GM12878 (cell line): ENCODE measurements at regions of chr2 and their contacts with region 1.

Region 1: GRCh38 chr2:231713730-231714430 is 5.6 kb downstream of the PTMA start:
- DNase-seq: peak; percentile 56
- ATAC-seq: peak; percentile 58
- H3K4me3 ChIP-seq: 0 out of 2 replicates have a peak overlapping the region, but pooled peaks have one; percentile 15
- H3K27ac ChIP-seq: 0 out of 2 replicates have a peak overlapping the region, but pooled peaks have one; percentile 7
- H3K4me1 ChIP-seq: peaks cover 20% of the 10 kb centered on the region
- H3K27me3 ChIP-seq: no peaks in the 10 kb centered on the region
- CTCF ChIP-seq: peak; percentile 92 to 95 (median 95)
- EP300 ChIP-seq: no peak
- POLR2A ChIP-seq: no peak
- RAD21 ChIP-seq: peak; percentile 49

Region 2: GRCh38 chr2:231557571-231558237 is 156.2 kb before region 1 on chr2:
- CTCF ChIA-PET with region 1: interaction called, 17 read pairs
- POLR2A ChIA-PET with region 1: no interaction called
- RAD21 ChIA-PET with region 1: interaction called, 14 read pairs
- SMC1A ChIA-PET with region 1: interaction called, 3 read pairs
- in situ Hi-C with region 1: no loop called
- intact Hi-C with region 1: no loop called
- DNase-seq: peak; percentile 49
- ATAC-seq: peak; percentile 95
- H3K4me3 ChIP-seq: no peak overlapping the region
- H3K27ac ChIP-seq: no peak overlapping the region
- H3K4me1 ChIP-seq: peaks cover 20% of the 10 kb centered on the region
- H3K27me3 ChIP-seq: no peaks in the 10 kb centered on the region
- CTCF ChIP-seq: peak; percentile 66 to 87 (median 74)
- EP300 ChIP-seq: no peak
- POLR2A ChIP-seq: no peak
- RAD21 ChIP-seq: peak; percentile 92

Region 3: DNA sequence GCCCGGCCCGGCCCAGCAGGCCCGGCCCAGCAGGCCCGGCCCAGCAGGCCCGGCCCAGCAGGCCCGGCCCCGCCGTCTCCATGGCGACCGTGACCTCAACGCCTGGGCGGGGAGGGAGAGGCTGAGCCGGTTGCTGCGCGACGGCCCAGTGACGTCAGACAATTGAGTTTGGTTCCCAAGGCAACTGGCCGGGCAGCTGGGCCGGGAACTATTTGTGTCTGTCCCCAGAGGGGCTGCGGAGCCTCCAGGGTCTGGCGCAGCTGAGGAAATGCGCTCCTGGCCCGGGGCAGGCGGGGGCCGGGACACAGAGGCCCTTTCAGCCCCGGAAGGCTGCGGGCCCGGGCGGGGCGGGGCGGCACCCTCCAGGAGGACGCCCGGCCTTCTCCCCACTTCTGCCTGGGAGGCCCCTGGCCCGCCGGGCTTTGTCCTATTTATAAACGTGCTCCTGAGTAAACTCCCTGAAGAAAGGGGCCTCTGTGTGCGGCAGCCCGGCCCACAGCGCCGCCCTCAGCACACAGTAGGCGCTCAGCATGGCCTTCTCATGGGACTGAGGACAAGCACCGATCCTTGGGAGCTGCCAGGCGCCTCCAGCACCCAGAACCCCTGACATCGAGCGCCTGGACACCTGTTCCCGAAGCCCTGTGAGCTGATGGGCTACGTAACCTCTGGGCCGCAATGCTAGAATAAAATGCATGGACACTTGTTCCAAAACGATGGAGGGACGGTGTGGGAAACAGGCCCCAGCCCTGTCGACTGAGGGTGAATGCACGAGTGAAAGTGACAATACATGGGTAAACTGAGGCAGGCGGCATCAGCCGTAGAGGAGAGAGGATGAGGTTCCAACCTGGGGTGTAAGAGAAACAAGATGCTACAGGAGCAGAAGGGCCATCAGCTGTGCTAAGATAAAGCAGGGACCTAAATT is 108.9 kb before region 1 on chr2:
- CTCF ChIA-PET with region 1: interaction called, 197 read pairs
- POLR2A ChIA-PET with region 1: interaction called, 4 read pairs
- RAD21 ChIA-PET with region 1: interaction called, 124 read pairs
- SMC1A ChIA-PET with region 1: interaction called, 12 read pairs
- in situ Hi-C with region 1: loop called (anchors 5 kb)
- intact Hi-C with region 1: no loop called
- DNase-seq: peak; percentile 83
- ATAC-seq: peak; percentile 84
- H3K4me3 ChIP-seq: peak overlapping the region; percentile 28; the same call in 1 of the 2 replicates
- H3K27ac ChIP-seq: peak overlapping the region; percentile 58
- H3K4me1 ChIP-seq: peaks cover 17% of the 10 kb centered on the region
- H3K27me3 ChIP-seq: no peaks in the 10 kb centered on the region
- CTCF ChIP-seq: peak in 1 of 3 experiments; percentile 27; a peak in 1 of 6 replicates
- EP300 ChIP-seq: peak; percentile 41 to 91; a peak in 3 of 4 replicates
- POLR2A ChIP-seq: no peak; the same call in 1 of the 2 replicates
- RAD21 ChIP-seq: no peak

Region 4: GRCh38 chr2:231632559-231633142 is 81.2 kb before region 1 on chr2:
- CTCF ChIA-PET with region 1: interaction called, 14 read pairs
- POLR2A ChIA-PET with region 1: no interaction called
- RAD21 ChIA-PET with region 1: interaction called, 6 read pairs
- SMC1A ChIA-PET with region 1: no interaction called
- in situ Hi-C with region 1: no loop called
- intact Hi-C with region 1: no loop called
- DNase-seq: no peak
- ATAC-seq: no peak
- H3K4me3 ChIP-seq: no peak overlapping the region
- H3K27ac ChIP-seq: no peak overlapping the region
- H3K4me1 ChIP-seq: no peaks in the 10 kb centered on the region
- H3K27me3 ChIP-seq: no peaks in the 10 kb centered on the region
- CTCF ChIP-seq: no peak
- EP300 ChIP-seq: no peak
- POLR2A ChIP-seq: no peak
- RAD21 ChIP-seq: no peak

Region 5: DNA sequence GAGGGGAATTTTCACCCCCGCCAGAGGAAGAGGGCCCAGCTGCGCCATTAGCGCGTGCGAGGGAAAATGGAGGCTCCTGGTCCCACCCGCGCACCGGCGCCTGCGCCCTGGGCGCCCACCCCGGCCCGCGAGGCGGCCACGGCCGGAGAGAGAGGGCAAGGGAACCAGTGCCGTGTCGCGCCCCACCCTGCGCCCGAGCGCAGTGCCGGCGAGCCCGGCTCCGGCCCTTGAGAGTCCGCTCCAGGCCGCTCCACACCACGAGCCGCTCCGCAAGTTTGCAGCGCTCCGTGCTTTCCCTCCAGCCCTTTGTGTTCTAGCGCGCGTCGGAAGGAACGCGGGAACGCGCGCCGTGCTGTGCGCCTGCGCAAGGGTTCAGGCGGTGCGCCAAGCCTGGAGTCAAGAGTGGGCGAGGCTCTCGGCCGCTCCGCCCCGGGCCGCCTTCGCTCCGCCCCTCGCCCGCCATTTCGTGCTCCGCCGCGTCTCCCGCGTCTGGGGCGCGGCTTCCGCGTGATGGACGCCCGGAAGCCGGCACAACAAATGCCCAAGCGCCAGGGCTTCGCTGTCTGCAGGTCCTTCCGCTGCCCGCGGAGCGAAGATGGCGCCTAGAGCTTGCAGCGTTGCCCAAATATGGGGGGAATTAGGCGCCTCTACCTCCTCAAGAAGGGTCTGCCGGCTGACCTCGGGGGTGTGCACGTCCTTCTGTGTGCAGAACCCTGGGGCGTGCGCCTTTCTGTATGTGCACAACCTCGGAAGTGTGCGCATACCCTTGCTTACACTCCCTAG is 51.7 kb before region 1 on chr2:
- CTCF ChIA-PET with region 1: interaction called, 12 read pairs
- POLR2A ChIA-PET with region 1: interaction called, 37 read pairs
- RAD21 ChIA-PET with region 1: interaction called, 3 read pairs
- SMC1A ChIA-PET with region 1: interaction called, 3 read pairs
- in situ Hi-C with region 1: no loop called
- intact Hi-C with region 1: no loop called
- DNase-seq: peak; percentile 95
- ATAC-seq: peak; percentile 77
- H3K4me3 ChIP-seq: peak overlapping the region; percentile 56; the same call in 1 of the 2 replicates
- H3K27ac ChIP-seq: peak overlapping the region; percentile 92
- H3K4me1 ChIP-seq: peaks cover 36% of the 10 kb centered on the region
- H3K27me3 ChIP-seq: no peaks in the 10 kb centered on the region
- CTCF ChIP-seq: no peak
- EP300 ChIP-seq: peak; percentile 10 to 53; a peak in 1 of 4 replicates
- POLR2A ChIP-seq: peak; percentile 85
- RAD21 ChIP-seq: 0 out of 2 replicates have a peak, but pooled peaks have one; percentile 7

Region 6: GRCh38 chr2:231687133-231687852 is 26.6 kb before region 1 on chr2:
- CTCF ChIA-PET with region 1: interaction called, 811 read pairs
- POLR2A ChIA-PET with region 1: interaction called, 7 read pairs
- RAD21 ChIA-PET with region 1: interaction called, 463 read pairs
- SMC1A ChIA-PET with region 1: interaction called, 33 read pairs
- in situ Hi-C with region 1: no loop called
- intact Hi-C with region 1: loop called (anchors 1 kb)
- DNase-seq: no peak
- ATAC-seq: peak; percentile 97
- H3K4me3 ChIP-seq: peak overlapping the region; percentile 28; the same call in 1 of the 2 replicates
- H3K27ac ChIP-seq: peak overlapping the region; percentile 38; the same call in 1 of the 2 replicates
- H3K4me1 ChIP-seq: peaks cover 4% of the 10 kb centered on the region
- H3K27me3 ChIP-seq: no peaks in the 10 kb centered on the region
- CTCF ChIP-seq: peak; percentile 88 to 94 (median 90)
- EP300 ChIP-seq: no peak
- POLR2A ChIP-seq: peak; percentile 57
- RAD21 ChIP-seq: peak; percentile 65

Region 7: DNA sequence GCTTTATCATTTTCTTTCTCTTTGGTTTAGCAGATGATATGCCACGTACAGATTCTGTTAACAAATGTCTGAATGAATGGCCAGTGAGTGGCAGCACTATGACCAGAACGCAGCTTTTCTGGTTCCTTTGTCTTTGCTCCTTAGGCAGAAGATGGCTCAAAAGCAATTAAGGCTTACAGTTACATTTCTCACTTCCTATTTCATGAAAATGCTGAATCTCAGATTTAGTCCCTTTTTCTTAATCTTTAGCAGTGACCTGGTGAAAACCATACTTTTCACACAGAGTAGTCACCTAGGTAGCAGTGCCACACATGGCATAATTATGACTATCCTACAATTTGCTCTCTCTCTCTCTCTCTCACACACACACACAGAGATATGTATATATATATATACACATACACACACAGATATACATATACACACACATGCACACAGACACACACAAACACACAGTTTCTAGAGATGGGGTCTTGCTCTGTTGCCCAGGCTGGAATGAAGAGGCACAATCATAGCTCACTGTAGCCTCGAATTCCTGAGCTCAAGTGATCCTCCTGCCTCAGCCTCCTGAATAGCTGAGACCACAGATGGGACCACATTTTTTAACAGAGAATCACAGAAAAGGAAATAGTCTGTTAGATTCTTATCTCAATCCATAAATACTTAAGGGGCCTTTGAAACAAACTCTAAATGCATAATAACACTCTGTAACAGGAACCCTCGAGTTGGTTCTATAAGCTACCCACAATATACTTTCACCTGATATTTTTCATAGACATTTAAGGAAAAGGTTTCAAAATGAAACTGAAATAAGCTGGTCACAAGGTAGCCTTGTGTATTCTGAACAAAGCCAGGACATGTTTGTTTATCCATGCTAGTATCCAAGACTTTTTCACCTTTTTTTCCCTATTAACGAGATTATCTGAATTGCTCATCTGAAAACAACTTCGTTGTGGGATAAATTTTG is 55.6 kb after region 1 on chr2:
- CTCF ChIA-PET with region 1: interaction called, 25 read pairs
- POLR2A ChIA-PET with region 1: interaction called, 3 read pairs
- RAD21 ChIA-PET with region 1: interaction called, 11 read pairs
- SMC1A ChIA-PET with region 1: no interaction called
- in situ Hi-C with region 1: no loop called
- intact Hi-C with region 1: no loop called
- DNase-seq: peak; percentile 51
- ATAC-seq: peak; percentile 81
- H3K4me3 ChIP-seq: peak overlapping the region; percentile 16; the same call in 1 of the 2 replicates
- H3K27ac ChIP-seq: peak overlapping the region; percentile 76
- H3K4me1 ChIP-seq: peaks cover 32% of the 10 kb centered on the region
- H3K27me3 ChIP-seq: no peaks in the 10 kb centered on the region
- CTCF ChIP-seq: peak in 1 of 3 experiments; percentile 30; a peak in 2 of 6 replicates
- EP300 ChIP-seq: peak in 1 of 2 experiments; percentile 38; a peak in 1 of 4 replicates
- POLR2A ChIP-seq: no peak
- RAD21 ChIP-seq: peak; percentile 29; the same call in 1 of the 2 replicates